ENCODE measurements at regions of chr16 and their contacts with region 1.

Region 1: DNA sequence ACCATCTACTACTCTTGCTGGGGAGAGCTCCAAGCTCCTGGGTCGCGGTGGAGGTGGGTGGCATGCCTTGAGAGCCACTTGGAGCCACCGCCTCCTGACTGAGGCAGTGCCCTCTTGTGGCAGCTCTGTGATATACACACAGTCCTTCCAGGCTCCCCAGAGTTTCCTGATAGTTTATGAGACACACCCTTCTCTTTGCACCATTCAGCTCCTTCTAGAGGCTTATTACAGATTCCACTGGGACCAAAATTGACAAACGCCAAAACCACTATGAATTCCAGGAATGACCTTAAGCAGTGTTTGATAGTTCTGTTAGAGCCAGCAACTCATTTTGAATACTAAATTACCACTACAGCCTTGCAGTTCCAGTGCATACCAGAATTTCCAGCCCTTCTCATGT is 170.1 kb upstream of the CDH13 start:
- DNase-seq: peak; percentile 40 to 69 (median 54)
- ATAC-seq: peak; percentile 81
- H3K4me3 ChIP-seq: no peak overlapping the region
- H3K27ac ChIP-seq: no peak overlapping the region
- H3K4me1 ChIP-seq: no peaks in the 10 kb centered on the region
- H3K27me3 ChIP-seq: no peaks in the 10 kb centered on the region

Region 2: GRCh38 chr16:82031116-82032084 is 425.3 kb before region 1 on chr16:
- intact Hi-C with region 1: loop called in 1 of 4 experiments (anchors 10 kb)
- DNase-seq: no peak
- ATAC-seq: no peak
- H3K4me3 ChIP-seq: no peak overlapping the region
- H3K27ac ChIP-seq: no peak overlapping the region
- H3K4me1 ChIP-seq: no peaks in the 10 kb centered on the region
- H3K27me3 ChIP-seq: no peaks in the 10 kb centered on the region

Region 3: DNA sequence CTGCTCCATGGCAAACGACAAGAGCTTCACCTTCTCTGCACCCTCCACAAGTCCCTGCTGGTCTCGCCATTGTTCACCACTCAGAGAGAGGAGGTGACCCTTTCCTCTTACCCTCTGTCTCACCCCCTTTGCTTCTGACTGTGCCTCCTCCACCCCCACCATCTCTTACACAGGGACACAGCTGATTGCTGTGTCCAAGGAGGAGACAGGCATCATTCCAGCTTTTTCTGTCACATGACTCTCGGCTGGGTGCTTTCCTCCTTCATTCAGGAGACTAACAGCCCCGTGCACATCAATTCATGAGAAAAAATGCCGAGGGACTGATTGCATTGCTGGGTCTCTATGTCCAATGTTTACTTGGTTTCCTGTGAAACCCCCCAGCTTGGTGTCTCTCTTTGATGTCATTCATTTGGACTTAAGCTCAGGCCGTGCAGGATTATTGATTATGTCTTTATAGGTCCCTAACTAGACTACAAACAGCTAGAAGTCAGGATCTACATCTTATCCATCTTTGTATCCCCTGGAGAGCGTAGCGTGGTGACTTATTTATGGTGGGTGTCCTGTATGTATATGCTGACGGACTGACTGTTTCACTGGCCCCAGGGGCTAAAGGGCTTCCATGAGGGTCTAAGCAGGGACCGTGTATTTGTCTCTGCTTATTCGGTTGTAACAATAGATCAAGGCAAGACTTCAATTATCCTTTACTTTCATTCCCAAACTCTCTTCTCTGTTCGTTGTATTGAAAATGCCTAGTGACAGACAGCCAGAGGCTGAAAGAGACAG is 87.9 kb after region 1 on chr16:
- intact Hi-C with region 1: no loop called
- DNase-seq: no peak
- ATAC-seq: peak in 1 of 2 donors; percentile 39
- H3K4me3 ChIP-seq: no peak overlapping the region
- H3K27ac ChIP-seq: no peak overlapping the region
- H3K4me1 ChIP-seq: no peaks in the 10 kb centered on the region
- H3K27me3 ChIP-seq: no peaks in the 10 kb centered on the region